GM13976 (cell line): ENCODE measurements at regions of chr1 and their contacts with region 1.

Region 1: GRCh38 chr1:150173141-150173585 is 23.4 kb downstream of the PLEKHO1 start:
- DNase-seq: no peak
- CTCF ChIP-seq: no peak

Region 2: DNA sequence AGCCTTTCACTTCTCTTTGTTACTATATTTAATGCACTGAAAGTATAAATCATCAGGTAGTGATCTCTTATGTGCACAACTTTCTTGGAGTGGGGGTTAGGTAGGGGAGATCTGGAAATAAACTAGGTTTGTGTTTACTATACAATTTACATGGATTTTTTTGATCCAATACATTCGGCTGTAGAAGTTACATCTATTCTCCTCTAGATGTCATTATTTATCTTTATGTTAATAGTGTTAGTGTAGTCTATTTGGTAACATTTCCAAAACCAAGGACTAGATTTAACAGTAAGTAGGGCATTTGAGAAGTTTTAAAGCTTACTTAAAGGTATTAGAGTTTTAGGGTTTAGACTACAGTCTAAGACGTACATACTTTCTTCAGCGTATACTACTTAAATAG is 100.2 kb before region 1 on chr1:
- in situ Hi-C with region 1: loop called (anchors 5 kb)
- DNase-seq: peak; percentile 45
- CTCF ChIP-seq: no peak

Region 3: GRCh38 chr1:150456146-150456647 is 283.0 kb after region 1 on chr1:
- in situ Hi-C with region 1: no loop called
- DNase-seq: no peak
- CTCF ChIP-seq: no peak

Region 4: GRCh38 chr1:150613061-150613920 is 440.1 kb after region 1 on chr1:
- in situ Hi-C with region 1: no loop called
- DNase-seq: peak; percentile 63
- CTCF ChIP-seq: no peak